ENCODE measurements at regions of chr11 and their contacts with region 1.

Region 1: DNA sequence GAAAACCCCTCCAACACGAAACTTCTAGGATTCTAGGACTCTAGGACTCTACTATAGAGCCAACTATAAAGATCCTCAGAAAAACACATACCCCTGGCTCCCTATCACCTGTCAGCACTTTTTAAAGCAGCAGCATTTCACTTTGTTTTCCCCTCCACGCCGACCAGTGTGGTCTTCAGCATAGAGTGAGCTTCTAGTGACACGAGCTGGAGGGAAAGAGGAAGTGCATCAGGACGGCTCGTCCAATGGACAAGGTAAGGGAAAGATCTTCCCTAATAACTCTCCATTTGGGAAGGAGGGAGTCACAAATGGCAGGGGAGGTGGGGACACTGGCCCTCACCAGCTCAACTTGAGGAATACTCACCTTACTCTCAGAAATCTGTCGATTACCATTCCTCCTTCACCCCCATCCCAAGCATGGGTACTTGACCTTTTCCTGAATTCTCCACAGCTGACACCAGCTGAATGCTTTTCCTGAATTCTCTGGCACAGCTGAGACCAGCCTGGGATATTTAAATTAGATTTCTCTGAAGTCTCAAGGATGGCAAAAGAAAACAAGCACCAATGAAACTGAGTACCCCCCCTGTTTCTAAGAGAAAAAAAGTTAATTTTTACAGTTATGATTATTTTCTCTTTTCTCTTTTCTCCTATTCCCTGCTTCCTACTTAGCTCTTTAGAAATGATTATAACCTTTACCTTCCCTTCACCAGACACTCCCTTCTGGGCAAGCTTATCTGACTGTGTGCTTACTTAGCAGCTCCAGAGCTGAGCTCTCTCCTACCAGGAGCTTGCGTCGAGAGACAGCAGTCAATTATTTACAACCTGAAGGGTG is 33.3 kb upstream of the NNMT start:
- DNase-seq: peak; percentile 46
- ATAC-seq: peak; percentile 62 to 64

Region 2: GRCh38 chr11:113884361-113884836 is 378.5 kb before region 1 on chr11:
- intact Hi-C with region 1: loop called in 1 of 2 experiments (anchors 10 kb)
- DNase-seq: no peak
- ATAC-seq: no peak

Region 3: DNA sequence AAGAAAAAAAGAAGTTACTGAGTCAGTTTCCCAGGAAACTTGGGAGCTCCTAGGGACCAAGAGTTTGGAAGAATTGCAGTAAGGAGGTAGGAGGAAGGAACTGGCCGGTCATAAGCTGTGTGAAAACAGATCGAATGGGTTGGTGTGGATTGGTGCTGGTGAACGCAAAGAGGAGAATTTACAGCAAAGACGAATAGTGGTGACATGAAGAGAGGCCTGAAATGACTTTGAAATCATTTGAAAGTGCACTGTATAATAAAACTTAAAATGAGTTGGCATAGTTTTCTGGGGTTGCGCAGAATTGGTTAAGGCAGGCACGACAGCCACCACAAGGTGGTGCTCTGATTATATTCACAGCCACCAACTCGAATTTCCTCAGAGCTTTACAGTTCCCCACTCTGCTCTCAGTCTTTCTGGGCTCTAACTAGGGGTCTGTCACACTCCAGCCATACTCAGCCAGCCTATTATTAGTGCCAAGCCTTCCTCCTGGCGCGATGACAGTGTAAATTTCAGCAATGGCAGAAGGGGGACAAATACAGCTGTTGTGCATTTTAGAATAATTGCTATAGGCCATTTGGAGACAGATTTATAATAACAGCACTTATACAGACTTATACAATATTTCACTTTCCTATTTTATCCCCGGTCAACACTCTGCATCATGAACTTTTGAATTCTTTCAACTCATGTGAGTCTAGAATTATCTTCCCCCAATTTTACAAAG is 366.6 kb before region 1 on chr11:
- intact Hi-C with region 1: loop called in 1 of 2 experiments (anchors 2 kb)
- DNase-seq: peak; percentile 35
- ATAC-seq: peak; percentile 76 to 84

Region 4: GRCh38 chr11:113994077-113994954 is 268.6 kb before region 1 on chr11:
- intact Hi-C with region 1: loop called (anchors 2 to 5 kb)
- DNase-seq: no peak
- ATAC-seq: no peak

Region 5: DNA sequence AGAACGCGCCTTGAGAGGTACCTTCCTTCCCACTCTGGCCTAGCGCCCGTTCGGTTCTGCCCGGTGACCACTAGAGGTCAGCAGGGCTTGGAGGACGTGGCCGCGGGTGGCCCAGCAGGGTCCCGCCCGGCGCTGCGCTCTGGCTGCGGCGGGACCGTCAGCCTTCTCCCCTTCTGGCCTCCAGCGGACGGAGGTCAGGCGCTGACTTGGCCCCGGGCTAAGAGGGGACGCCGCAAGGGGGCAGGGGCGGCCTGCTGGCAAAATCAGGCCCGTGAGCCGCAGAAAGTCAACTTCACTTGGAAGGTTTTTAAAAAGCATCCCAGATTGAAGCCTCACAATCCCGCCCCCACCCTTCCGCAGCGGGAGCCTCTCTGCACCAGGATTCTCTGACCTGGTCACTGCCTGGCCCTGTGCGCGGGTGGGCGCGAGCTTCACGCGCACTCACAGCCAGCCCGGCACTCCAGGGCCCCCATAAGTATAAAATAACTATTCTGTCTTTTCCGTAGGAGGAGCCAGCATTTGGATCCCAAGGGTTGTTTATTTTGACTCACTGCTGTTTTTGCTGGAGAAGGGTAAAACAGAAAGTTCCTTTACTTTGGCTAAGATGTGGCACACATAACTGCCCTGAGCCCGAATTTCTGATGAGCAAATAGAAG is 226.6 kb before region 1 on chr11:
- intact Hi-C with region 1: loop called (anchors 2 kb)
- DNase-seq: peak; percentile 90
- ATAC-seq: peak; percentile 95

Measured in left cardiac atrium (tissue), 4 donors.